Activated T-helper 2 cell treated with anti-CD3 and anti-CD28 coated beads, Interferon-gamma antibody, Interleukin-2, Interleukin-4, amounts not matched to agents 10 μg/mL and 5 μg/mL and 100 μg/mL, durations not matched to agents 14 hours and 24 hours and 36 hours (primary cell): ENCODE measurements at regions of chr2 and their contacts with region 1.

Region 1: GRCh38 chr2:127064642-127065250 is 42.2 kb downstream of the BIN1 start:
- DNase-seq: peak; percentile 62
- H3K4me3 Mint-ChIP-seq: no peak overlapping the region
- H3K27ac Mint-ChIP-seq: peak overlapping the region; percentile 62
- H3K4me1 Mint-ChIP-seq: peaks cover 13% of the 10 kb centered on the region
- H3K27me3 Mint-ChIP-seq: no peaks in the 10 kb centered on the region

Region 2: DNA sequence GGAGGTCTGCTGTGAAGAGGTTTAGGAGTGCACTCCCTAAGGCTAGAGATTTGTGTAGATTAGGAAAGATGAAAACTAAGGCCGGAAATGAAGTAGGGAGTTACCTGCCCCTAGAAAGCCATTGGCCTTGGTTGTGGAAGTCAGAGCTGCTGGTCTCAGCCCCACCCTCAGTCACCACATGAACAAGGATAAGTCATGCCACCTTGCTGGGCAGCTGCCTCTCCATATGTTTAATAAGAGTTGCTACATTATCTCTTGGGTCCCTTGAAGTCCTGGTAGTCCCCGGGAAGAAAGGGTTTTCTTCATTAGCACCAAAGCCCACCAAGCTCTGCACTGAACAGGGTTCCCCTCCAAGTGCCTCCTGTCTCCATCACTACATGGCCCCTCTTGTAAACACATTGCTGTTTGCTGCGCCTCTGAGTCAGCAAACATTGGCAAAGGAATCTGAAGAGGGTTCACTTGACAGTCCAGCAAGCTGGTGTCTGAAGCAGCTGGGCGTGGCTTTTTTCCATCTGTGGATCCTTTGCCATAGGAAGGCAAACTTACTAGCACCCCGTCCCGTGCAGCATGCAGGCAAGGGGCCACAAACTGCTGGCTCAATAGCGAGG is 83.4 kb before region 1 on chr2:
- intact Hi-C with region 1: no loop called
- DNase-seq: no peak
- H3K4me3 Mint-ChIP-seq: no peak overlapping the region
- H3K27ac Mint-ChIP-seq: no peak overlapping the region
- H3K4me1 Mint-ChIP-seq: no peaks in the 10 kb centered on the region
- H3K27me3 Mint-ChIP-seq: peaks cover 6% of the 10 kb centered on the region

Region 3: DNA sequence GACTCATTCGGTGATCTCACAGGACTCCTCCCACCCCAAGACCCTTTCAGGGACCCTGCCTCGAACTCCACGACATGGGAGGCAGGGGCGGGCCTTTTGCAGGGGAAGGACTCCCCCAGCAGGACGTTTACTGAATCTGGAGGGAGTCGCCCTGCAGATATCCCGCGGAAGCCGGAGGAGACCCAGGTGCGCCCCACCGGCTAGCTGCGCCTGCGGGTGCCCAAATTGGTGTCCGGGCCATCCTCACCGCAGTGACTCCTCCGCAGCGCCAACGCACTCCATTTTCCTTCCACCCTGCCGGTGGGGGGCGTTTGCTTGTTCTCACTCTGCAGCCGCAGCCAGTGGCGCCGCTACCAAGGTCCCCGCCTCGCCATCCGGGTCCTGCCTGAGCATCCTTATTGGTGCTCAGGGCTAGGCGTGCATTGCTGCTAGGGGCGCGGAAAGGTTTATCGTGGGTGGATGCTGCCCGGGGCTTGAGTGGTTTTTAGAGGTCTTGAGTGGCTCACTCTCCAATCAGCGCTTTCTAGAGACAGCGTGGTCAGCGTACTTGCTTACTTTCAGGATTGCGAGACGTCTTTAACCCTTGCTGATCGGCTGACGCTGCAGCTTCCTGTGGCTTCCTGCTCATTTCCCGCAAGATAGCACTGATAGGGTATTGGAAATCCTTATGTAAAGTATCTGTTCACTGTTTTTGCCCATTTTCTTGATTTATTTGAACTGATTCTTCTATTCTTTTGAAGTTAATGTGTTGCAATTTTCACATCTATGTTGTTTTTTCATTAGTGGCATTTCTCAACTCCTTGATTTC is 39.2 kb before region 1 on chr2:
- intact Hi-C with region 1: loop called (anchors 1 kb)
- DNase-seq: peak; percentile 69
- H3K4me3 Mint-ChIP-seq: peak overlapping the region; percentile 71
- H3K27ac Mint-ChIP-seq: no peak overlapping the region
- H3K4me1 Mint-ChIP-seq: peaks cover 12% of the 10 kb centered on the region
- H3K27me3 Mint-ChIP-seq: peaks cover 51% of the 10 kb centered on the region

Region 4: GRCh38 chr2:127081826-127082633 is 17.3 kb after region 1 on chr2:
- intact Hi-C with region 1: loop called (anchors 1 kb)
- DNase-seq: peak; percentile 74
- H3K4me3 Mint-ChIP-seq: peak overlapping the region; percentile 76
- H3K27ac Mint-ChIP-seq: peak overlapping the region; percentile 90
- H3K4me1 Mint-ChIP-seq: peaks cover 63% of the 10 kb centered on the region
- H3K27me3 Mint-ChIP-seq: no peaks in the 10 kb centered on the region

Region 5: DNA sequence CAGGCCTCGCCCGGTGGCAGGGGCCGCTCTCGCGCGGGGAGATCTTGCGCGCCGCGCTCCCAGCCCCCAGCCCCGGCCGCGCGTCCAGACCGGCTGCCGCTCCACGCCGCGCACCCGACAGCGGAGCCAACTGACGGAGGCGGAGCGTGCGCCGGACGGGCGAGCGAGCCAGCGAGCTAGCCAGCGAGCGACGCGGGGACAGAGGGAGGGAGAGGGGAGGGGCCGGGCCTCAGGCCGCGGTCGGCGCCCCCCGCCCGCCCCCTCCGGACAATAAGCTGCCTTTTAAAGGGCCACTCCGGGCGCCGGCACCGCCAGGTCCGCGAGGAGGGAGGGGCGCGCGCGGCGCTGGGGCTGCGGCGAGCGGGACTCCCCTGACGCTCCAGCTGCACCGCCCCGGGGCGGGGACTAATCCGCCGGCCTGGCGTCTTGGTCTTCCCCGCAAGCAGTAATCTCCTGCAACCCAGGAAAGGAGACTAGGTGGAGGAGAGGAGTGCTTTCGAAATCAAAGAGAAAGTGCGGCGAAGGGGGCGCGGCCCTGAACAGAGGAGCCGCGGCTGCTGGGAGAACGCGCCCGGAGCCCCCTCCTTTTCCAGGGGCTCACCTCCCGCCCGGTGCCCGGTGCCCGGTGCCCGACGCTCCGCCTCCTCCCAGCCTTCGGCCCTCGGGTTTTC is 42.3 kb after region 1 on chr2 and contains the start of gene BIN1:
- intact Hi-C with region 1: loop called (anchors 5 kb)
- DNase-seq: peak; percentile 75
- H3K4me3 Mint-ChIP-seq: peak within 1 kb of the TSS; percentile 82
- H3K27ac Mint-ChIP-seq: no peak within 1 kb of the TSS
- H3K4me1 Mint-ChIP-seq: peaks cover 4% of the 10 kb centered on the region
- H3K27me3 Mint-ChIP-seq: peaks cover 37% of the 10 kb centered on the region
- total RNA-seq, gene BIN1: 48.1 and 51.7 TPM in 2 replicates